Ovary (tissue), 10 donors: ENCODE measurements at regions of chr7 and their contacts with region 1.

Region 1: GRCh38 chr7:127514499-127514898 is 70.9 kb downstream of the GCC1 start:
- DNase-seq: no peak
- H3K4me3 ChIP-seq: no peak overlapping the region
- H3K27ac ChIP-seq: no peak overlapping the region
- H3K4me1 ChIP-seq: no peaks in the 10 kb centered on the region
- H3K27me3 ChIP-seq: no peaks in the 10 kb centered on the region
- CTCF ChIP-seq: no peak
- EP300 ChIP-seq: no peak
- POLR2A ChIP-seq: no peak

Region 2: DNA sequence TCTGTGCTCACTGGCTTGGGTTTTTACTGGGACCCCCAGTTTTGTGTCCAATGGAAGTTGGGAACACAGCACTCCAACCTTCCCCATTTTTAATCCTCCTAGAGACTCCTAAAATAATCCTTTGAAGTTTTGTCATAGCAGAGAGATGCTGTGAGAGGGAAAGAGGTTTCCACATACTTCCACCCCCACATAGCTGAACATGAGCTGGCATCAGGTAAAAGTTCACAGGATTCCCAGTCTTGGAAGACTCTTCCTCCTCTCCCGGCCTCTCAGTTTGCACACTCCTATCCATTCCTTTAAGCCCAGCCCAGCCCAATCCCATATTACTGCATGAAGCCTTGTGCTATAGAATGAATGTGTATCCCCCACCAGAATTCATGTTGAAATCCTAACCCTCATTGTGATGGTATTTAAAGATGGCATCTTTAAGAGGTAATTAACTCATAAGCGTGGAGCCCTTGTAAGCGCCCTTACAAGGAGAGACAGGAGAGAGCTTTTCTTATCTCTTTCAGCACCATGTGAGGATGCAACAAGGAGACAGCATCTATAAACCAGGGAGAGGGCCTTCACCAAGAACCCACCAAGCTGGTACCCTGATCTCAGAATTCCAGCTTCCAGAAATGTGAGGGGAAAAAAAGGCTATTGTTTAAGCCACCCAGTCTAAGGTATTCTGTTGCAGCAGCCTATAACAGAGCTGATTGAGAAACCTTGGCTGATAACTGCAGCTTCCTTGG is 284.1 kb before region 1 on chr7:
- intact Hi-C with region 1: no loop called
- DNase-seq: no peak
- H3K4me3 ChIP-seq: no peak overlapping the region
- H3K27ac ChIP-seq: no peak overlapping the region
- H3K4me1 ChIP-seq: no peaks in the 10 kb centered on the region
- H3K27me3 ChIP-seq: no peaks in the 10 kb centered on the region
- CTCF ChIP-seq: no peak
- EP300 ChIP-seq: no peak
- POLR2A ChIP-seq: no peak

Region 3: GRCh38 chr7:127347567-127348246 is 166.8 kb before region 1 on chr7:
- intact Hi-C with region 1: loop called in 1 of 4 experiments (anchors 10 kb)
- DNase-seq: peak; percentile 27 to 75 (median 40)
- H3K4me3 ChIP-seq: peak overlapping the region; percentile 30
- H3K27ac ChIP-seq: no peak overlapping the region
- H3K4me1 ChIP-seq: peaks cover 4% of the 10 kb centered on the region
- H3K27me3 ChIP-seq: no peaks in the 10 kb centered on the region
- CTCF ChIP-seq: peak in 1 of 3 donors; percentile 45
- EP300 ChIP-seq: no peak
- POLR2A ChIP-seq: no peak

Region 4: GRCh38 chr7:127550247-127550646 is 35.7 kb after region 1 on chr7:
- intact Hi-C with region 1: no loop called
- DNase-seq: no peak
- H3K4me3 ChIP-seq: no peak overlapping the region
- H3K27ac ChIP-seq: no peak overlapping the region
- H3K4me1 ChIP-seq: no peaks in the 10 kb centered on the region
- H3K27me3 ChIP-seq: no peaks in the 10 kb centered on the region
- CTCF ChIP-seq: no peak
- EP300 ChIP-seq: no peak
- POLR2A ChIP-seq: no peak